ENCODE measurements at regions of chr21 and their contacts with region 1.

Region 1: GRCh38 chr21:35011681-35012080 is 37.4 kb downstream of the RUNX1 start:
- DNase-seq: peak; percentile 40
- ATAC-seq: peak; percentile 70
- H3K4me3 ChIP-seq: no peak overlapping the region
- H3K27ac ChIP-seq: no peak overlapping the region
- H3K4me1 ChIP-seq: peaks cover 21% of the 10 kb centered on the region
- H3K27me3 ChIP-seq: no peaks in the 10 kb centered on the region
- CTCF ChIP-seq: no peak

Region 2: DNA sequence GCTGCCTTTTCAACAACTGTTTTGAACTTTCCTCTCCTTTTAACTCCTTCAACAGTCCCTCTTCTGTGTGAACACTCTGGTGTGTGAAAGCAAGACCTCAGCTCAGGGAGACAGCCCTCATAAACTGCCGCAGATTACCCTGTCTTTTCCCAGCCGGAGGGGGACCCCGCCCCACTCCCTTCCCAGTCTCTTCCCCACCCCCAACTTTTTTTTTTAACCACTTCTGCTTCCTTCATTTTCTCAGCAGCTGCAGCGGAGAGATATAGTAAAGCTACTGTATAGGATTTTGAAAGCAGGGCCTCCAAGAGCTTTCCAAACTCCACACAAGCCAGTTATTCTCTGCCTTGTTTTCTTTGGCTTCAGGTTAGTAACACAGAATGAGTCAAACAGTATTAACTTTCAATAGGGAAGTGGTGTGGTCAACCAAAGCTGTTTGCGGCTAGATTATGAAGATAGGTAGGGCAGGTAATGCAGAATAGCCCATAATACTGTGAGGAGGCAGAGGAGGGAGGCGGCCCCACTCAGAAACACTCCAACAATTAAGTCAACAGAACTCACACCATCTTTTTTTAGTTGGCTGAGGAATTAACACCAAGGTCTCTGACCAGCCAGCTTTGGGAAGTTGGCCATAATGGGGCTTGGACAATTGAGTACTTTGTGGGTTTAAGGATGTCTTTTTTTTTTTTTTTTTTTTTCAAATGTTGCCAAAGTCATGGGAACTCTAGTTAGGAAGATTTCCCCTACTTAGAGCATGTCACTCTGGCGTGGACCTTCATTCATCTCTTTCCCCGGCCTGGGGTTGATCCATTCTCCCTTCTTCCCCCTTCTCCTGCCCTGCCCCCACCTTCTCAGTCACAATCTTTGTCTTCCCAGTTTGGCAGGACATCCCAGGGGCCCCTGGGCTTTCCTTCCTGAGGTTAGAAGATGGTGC is 165.9 kb before region 1 on chr21:
- CTCF ChIA-PET with region 1: no interaction called
- POLR2A ChIA-PET with region 1: no interaction called
- intact Hi-C with region 1: no loop called
- DNase-seq: peak; percentile 95
- ATAC-seq: peak; percentile 85
- H3K4me3 ChIP-seq: peak overlapping the region; percentile 30; the same call in 1 of the 2 replicates
- H3K27ac ChIP-seq: peak overlapping the region; percentile 85
- H3K4me1 ChIP-seq: peaks cover 36% of the 10 kb centered on the region
- H3K27me3 ChIP-seq: no peaks in the 10 kb centered on the region
- CTCF ChIP-seq: no peak

Region 3: GRCh38 chr21:34908419-34909055 is 103.1 kb before region 1 on chr21:
- CTCF ChIA-PET with region 1: no interaction called
- POLR2A ChIA-PET with region 1: no interaction called
- intact Hi-C with region 1: loop called (anchors 10 kb)
- DNase-seq: peak; percentile 72
- ATAC-seq: no peak
- H3K4me3 ChIP-seq: no peak overlapping the region
- H3K27ac ChIP-seq: no peak overlapping the region
- H3K4me1 ChIP-seq: peaks cover 21% of the 10 kb centered on the region
- H3K27me3 ChIP-seq: no peaks in the 10 kb centered on the region
- CTCF ChIP-seq: no peak

Region 4: GRCh38 chr21:35628331-35628730 is 616.6 kb after region 1 on chr21:
- CTCF ChIA-PET with region 1: interaction called, 10 read pairs
- POLR2A ChIA-PET with region 1: no interaction called
- intact Hi-C with region 1: no loop called
- DNase-seq: peak; percentile 40
- ATAC-seq: no peak
- H3K4me3 ChIP-seq: no peak overlapping the region
- H3K27ac ChIP-seq: no peak overlapping the region
- H3K4me1 ChIP-seq: peaks cover 4% of the 10 kb centered on the region; the same call in 1 of the 2 replicates
- H3K27me3 ChIP-seq: no peaks in the 10 kb centered on the region
- CTCF ChIP-seq: no peak

Measured in PC-3 (cell line).